ENCODE measurements at regions of chr11 and their contacts with region 1.

Region 1: DNA sequence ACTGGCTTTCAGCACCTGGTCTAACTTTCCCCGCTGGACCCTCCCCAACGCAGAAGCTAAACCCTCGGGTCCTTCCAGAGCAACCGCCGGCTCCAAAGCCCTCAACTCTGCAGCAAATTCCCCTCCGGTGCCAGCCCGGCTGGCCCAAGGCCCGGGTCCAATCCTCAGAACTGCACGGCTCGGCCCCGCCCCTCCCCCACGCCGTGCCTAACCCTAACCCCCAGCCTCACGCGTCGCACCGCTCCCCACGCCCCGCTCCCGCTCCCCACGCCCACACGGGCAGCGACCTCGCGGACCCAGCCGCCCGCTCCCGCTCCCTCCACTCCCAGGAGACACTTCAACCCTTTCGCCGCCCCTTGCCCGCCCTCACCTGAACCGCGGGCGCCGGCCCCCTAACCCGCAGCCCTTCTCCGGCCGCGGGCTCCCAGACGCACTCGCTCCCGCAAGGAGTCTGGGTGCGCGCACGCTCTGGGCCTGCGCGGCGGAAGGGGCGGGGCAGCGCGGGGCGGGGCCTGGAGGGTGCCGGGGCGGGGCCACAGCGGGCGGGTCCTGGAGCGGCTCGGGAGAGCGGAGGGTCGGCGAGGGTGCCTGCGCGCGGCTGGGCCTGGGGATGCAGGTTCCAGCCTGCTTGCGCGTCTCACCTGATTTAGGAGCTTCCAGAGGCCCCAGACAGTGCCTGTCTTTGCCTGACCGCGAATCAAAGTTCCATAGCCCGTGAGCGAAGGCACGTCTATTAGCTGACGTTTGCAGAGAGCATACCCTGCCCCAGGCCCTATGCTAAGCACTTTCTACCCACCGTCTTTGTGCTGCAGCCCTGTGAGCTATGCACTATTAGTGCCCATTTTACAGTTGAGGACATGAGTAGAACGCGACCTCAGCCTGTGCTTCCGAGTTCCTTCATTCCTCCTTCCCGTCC is at the start of gene NFRKB:
- DNase-seq: peak; percentile 85
- ATAC-seq: peak; percentile 94
- H3K4me3 ChIP-seq: peak within 1 kb of the TSS; percentile 92
- H3K27ac ChIP-seq: peak within 1 kb of the TSS; percentile 21; the same call in 1 of the 2 replicates
- H3K4me1 ChIP-seq: peaks cover 20% of the 10 kb centered on the region
- H3K27me3 ChIP-seq: no peaks in the 10 kb centered on the region
- CTCF ChIP-seq: no peak
- total RNA-seq, gene NFRKB: 48.2 and 57.0 TPM in 2 replicates

Region 2: GRCh38 chr11:129917231-129917630 is 21.8 kb after region 1 on chr11:
- CTCF ChIA-PET with region 1: interaction called, 18 read pairs
- POLR2A ChIA-PET with region 1: no interaction called
- intact Hi-C with region 1: no loop called
- DNase-seq: peak; percentile 60
- ATAC-seq: peak; percentile 75
- H3K4me3 ChIP-seq: no peak overlapping the region
- H3K27ac ChIP-seq: no peak overlapping the region
- H3K4me1 ChIP-seq: no peaks in the 10 kb centered on the region
- H3K27me3 ChIP-seq: no peaks in the 10 kb centered on the region
- CTCF ChIP-seq: no peak

Region 3: DNA sequence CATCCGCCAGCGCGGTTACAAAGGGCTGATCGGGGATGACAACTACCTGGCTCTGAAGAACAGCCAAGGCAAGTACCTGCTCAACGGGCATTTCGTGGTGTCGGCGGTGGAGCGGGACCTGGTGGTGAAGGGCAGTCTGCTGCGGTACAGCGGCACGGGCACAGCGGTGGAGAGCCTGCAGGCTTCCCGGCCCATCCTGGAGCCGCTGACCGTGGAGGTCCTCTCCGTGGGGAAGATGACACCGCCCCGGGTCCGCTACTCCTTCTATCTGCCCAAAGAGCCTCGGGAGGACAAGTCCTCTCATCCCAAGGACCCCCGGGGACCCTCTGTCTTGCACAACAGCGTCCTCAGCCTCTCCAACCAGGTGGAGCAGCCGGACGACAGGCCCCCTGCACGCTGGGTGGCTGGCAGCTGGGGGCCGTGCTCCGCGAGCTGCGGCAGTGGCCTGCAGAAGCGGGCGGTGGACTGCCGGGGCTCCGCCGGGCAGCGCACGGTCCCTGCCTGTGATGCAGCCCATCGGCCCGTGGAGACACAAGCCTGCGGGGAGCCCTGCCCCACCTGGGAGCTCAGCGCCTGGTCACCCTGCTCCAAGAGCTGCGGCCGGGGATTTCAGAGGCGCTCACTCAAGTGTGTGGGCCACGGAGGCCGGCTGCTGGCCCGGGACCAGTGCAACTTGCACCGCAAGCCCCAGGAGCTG is 577.9 kb after region 1 on chr11:
- CTCF ChIA-PET with region 1: no interaction called
- POLR2A ChIA-PET with region 1: no interaction called
- intact Hi-C with region 1: no loop called
- DNase-seq: no peak
- ATAC-seq: no peak
- H3K4me3 ChIP-seq: no peak overlapping the region
- H3K27ac ChIP-seq: no peak overlapping the region
- H3K4me1 ChIP-seq: peaks cover 10% of the 10 kb centered on the region
- H3K27me3 ChIP-seq: no peaks in the 10 kb centered on the region
- CTCF ChIP-seq: no peak